B cell (primary cell): ENCODE measurements at regions of chr14 and their contacts with region 1.

Region 1: GRCh38 chr14:76911473-76911872 is 85.3 kb downstream of the LRRC74A start:
- DNase-seq: no peak
- ATAC-seq: no peak
- H3K4me3 ChIP-seq: no peak overlapping the region
- H3K4me3 Mint-ChIP-seq: no peak overlapping the region
- H3K27ac ChIP-seq: no peak overlapping the region
- H3K27ac Mint-ChIP-seq: peak overlapping the region; percentile 72
- H3K4me1 ChIP-seq: peaks cover 14 to 25% of the 10 kb centered on the region in 2 donors
- H3K4me1 Mint-ChIP-seq: peaks cover 19% of the 10 kb centered on the region
- H3K27me3 ChIP-seq: no peaks in the 10 kb centered on the region
- H3K27me3 Mint-ChIP-seq: no peaks in the 10 kb centered on the region
- CTCF ChIP-seq: no peak

Region 2: DNA sequence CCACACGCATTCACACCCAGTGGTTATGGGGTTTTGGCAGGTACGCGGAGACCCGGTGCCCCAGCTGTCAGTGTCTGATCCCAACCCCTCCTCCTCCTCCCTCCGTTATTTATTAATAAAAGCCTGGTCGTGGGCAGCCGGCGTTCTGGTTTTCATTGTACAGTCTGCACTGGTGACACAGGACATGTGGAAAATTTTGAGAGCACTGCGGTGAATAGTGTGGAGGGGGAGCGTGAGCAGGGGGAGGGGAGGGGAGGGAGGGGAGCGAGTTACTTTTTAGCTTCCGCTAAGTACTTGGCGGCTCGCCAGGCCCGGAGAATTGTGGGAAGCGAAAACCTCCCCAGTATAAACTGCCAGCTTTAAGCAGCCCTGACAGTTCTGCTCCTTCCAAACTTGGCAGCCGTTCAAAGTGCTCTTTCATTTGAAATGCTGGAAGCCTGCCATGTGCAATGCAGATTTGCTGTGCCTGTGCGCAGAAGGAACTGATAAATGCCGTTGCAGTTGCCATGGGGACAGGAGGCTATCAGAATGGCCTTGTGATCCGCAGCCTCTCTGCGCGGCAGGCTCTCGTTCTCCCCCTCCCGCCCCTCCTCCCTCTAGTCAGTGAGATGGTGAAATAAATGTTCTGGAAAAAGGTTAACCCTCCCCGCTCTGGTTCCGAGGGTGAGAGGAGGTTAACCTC is 128.7 kb after region 1 on chr14:
- CTCF ChIA-PET with region 1: interaction called, 194 read pairs
- POLR2A ChIA-PET with region 1: no interaction called
- intact Hi-C with region 1: no loop called
- DNase-seq: peak; percentile 94
- ATAC-seq: peak; percentile 72
- H3K4me3 ChIP-seq: peak overlapping the region; percentile 11 to 70 (median 56)
- H3K4me3 Mint-ChIP-seq: peak overlapping the region; percentile 88
- H3K27ac ChIP-seq: peak overlapping the region; percentile 89 to 93
- H3K27ac Mint-ChIP-seq: peak overlapping the region; percentile 98
- H3K4me1 ChIP-seq: peaks cover 71 to 86% of the 10 kb centered on the region in 2 donors
- H3K4me1 Mint-ChIP-seq: peaks cover 79% of the 10 kb centered on the region
- H3K27me3 ChIP-seq: no peaks in the 10 kb centered on the region
- H3K27me3 Mint-ChIP-seq: no peaks in the 10 kb centered on the region
- CTCF ChIP-seq: no peak

Region 3: DNA sequence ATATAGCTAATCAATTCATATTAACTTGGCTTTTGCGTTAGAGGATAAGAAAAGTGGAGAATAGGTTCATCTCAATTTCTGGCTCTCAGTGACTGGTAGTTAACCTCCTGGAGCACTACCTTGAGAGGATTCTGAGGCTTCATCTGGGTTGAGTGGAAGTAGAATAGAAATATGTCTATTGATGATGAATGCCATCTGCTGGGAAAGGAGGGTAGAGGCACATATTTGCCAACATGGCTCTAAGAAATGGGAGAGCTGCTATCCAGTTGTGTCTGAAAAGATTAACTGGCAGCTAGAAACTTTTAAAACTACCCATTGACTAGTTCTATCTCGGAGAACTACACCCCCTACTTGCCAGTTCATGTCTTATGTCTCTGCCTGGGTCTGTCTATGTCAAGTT is 1788.8 kb after region 1 on chr14:
- CTCF ChIA-PET with region 1: no interaction called
- POLR2A ChIA-PET with region 1: no interaction called
- intact Hi-C with region 1: no loop called
- DNase-seq: no peak
- ATAC-seq: no peak
- H3K4me3 ChIP-seq: no peak overlapping the region
- H3K4me3 Mint-ChIP-seq: no peak overlapping the region
- H3K27ac ChIP-seq: no peak overlapping the region
- H3K27ac Mint-ChIP-seq: no peak overlapping the region
- H3K4me1 ChIP-seq: no peaks in the 10 kb centered on the region
- H3K4me1 Mint-ChIP-seq: no peaks in the 10 kb centered on the region
- H3K27me3 ChIP-seq: no peaks in the 10 kb centered on the region
- H3K27me3 Mint-ChIP-seq: no peaks in the 10 kb centered on the region
- CTCF ChIP-seq: no peak